HepG2 (cell line): ENCODE measurements at regions of chr15 and their contacts with region 1.

Region 1: GRCh38 chr15:37995461-37996347 is 61.3 kb downstream of the TMCO5A start:
- DNase-seq: peak; percentile 18
- ATAC-seq: peak; percentile 41; the same call in 1 of the 3 replicates
- H3K4me3 ChIP-seq: no peak overlapping the region
- H3K27ac ChIP-seq: no peak overlapping the region
- H3K4me1 ChIP-seq: no peaks in the 10 kb centered on the region
- H3K27me3 ChIP-seq: no peaks in the 10 kb centered on the region; a peak in 2 of 5 replicates
- CTCF ChIP-seq: peak; percentile 61
- EP300 ChIP-seq: no peak
- POLR2A ChIP-seq: no peak
- RAD21 ChIP-seq: no peak

Region 2: GRCh38 chr15:37933666-37934065 is 62.0 kb before region 1 on chr15:
- CTCF ChIA-PET with region 1: no interaction called
- POLR2A ChIA-PET with region 1: no interaction called
- in situ Hi-C with region 1: no loop called
- intact Hi-C with region 1: no loop called
- DNase-seq: no peak
- ATAC-seq: no peak
- H3K4me3 ChIP-seq: no peak overlapping the region
- H3K27ac ChIP-seq: no peak overlapping the region
- H3K4me1 ChIP-seq: no peaks in the 10 kb centered on the region
- H3K27me3 ChIP-seq: no peaks in the 10 kb centered on the region
- CTCF ChIP-seq: no peak
- EP300 ChIP-seq: no peak
- POLR2A ChIP-seq: no peak
- RAD21 ChIP-seq: no peak

Region 3: GRCh38 chr15:38050529-38051448 is 55.1 kb after region 1 on chr15:
- CTCF ChIA-PET with region 1: no interaction called
- POLR2A ChIA-PET with region 1: no interaction called
- in situ Hi-C with region 1: no loop called
- intact Hi-C with region 1: no loop called
- DNase-seq: no peak
- ATAC-seq: no peak; the same call in 2 of the 3 replicates
- H3K4me3 ChIP-seq: no peak overlapping the region
- H3K27ac ChIP-seq: no peak overlapping the region
- H3K4me1 ChIP-seq: no peaks in the 10 kb centered on the region
- H3K27me3 ChIP-seq: no peaks in the 10 kb centered on the region
- CTCF ChIP-seq: no peak
- EP300 ChIP-seq: no peak
- POLR2A ChIP-seq: no peak
- RAD21 ChIP-seq: no peak

Region 4: GRCh38 chr15:38168467-38169070 is 172.9 kb after region 1 on chr15:
- CTCF ChIA-PET with region 1: no interaction called
- POLR2A ChIA-PET with region 1: no interaction called
- in situ Hi-C with region 1: no loop called
- intact Hi-C with region 1: loop called (anchors 5 kb)
- DNase-seq: no peak
- ATAC-seq: no peak
- H3K4me3 ChIP-seq: no peak overlapping the region
- H3K27ac ChIP-seq: no peak overlapping the region
- H3K4me1 ChIP-seq: peaks cover 15% of the 10 kb centered on the region
- H3K27me3 ChIP-seq: no peaks in the 10 kb centered on the region
- CTCF ChIP-seq: no peak
- EP300 ChIP-seq: no peak
- POLR2A ChIP-seq: no peak
- RAD21 ChIP-seq: no peak